ENCODE measurements at regions of chr10 and their contacts with region 1.

Region 1: DNA sequence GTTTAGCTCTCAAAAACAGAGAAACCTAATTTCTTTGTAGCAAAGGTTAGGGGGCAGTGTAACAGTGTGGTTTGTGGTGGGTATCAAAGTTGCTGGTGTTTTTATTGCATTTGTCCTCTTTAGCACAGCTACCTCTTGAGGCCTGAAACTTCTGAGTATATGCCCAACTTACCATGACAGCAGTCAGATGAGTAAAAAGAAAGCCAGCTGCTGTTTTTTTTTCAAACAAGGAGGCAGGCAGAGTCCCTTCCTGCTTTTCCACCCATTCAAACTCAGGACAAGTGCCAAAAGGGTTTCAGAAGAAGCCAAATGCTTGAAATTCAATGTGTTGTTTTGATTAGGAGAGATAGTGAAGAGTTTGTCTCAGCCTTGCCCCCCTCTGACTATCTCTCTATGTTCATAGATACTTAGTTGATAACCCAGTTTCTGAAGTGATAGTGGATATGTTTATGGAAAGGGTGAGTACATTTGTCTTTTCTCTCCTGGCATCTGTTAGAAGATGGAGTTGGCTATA is 23.1 kb downstream of the GBF1 start:
- DNase-seq: no peak
- ATAC-seq: peak; percentile 61
- H3K4me3 Mint-ChIP-seq: peak overlapping the region; percentile 48
- H3K27ac Mint-ChIP-seq: peak overlapping the region; percentile 94
- H3K4me1 Mint-ChIP-seq: peaks cover 57% of the 10 kb centered on the region
- H3K27me3 Mint-ChIP-seq: no peaks in the 10 kb centered on the region

Region 2: GRCh38 chr10:102280397-102281101 is 12.1 kb after region 1 on chr10:
- CTCF ChIA-PET with region 1: interaction called, 27 read pairs
- POLR2A ChIA-PET with region 1: interaction called, 26 read pairs
- intact Hi-C with region 1: loop called (anchors 1 kb)
- DNase-seq: no peak
- ATAC-seq: no peak
- H3K4me3 Mint-ChIP-seq: peak overlapping the region; percentile 0
- H3K27ac Mint-ChIP-seq: peak overlapping the region; percentile 72
- H3K4me1 Mint-ChIP-seq: peaks cover 59% of the 10 kb centered on the region
- H3K27me3 Mint-ChIP-seq: no peaks in the 10 kb centered on the region

Region 3: GRCh38 chr10:102287538-102287937 is 19.1 kb after region 1 on chr10:
- CTCF ChIA-PET with region 1: interaction called, 27 read pairs
- POLR2A ChIA-PET with region 1: interaction called, 26 read pairs
- intact Hi-C with region 1: loop called (anchors 1 kb)
- DNase-seq: no peak
- ATAC-seq: peak; percentile 49
- H3K4me3 Mint-ChIP-seq: no peak overlapping the region
- H3K27ac Mint-ChIP-seq: peak overlapping the region; percentile 66
- H3K4me1 Mint-ChIP-seq: peaks cover 65% of the 10 kb centered on the region
- H3K27me3 Mint-ChIP-seq: no peaks in the 10 kb centered on the region

Region 4: DNA sequence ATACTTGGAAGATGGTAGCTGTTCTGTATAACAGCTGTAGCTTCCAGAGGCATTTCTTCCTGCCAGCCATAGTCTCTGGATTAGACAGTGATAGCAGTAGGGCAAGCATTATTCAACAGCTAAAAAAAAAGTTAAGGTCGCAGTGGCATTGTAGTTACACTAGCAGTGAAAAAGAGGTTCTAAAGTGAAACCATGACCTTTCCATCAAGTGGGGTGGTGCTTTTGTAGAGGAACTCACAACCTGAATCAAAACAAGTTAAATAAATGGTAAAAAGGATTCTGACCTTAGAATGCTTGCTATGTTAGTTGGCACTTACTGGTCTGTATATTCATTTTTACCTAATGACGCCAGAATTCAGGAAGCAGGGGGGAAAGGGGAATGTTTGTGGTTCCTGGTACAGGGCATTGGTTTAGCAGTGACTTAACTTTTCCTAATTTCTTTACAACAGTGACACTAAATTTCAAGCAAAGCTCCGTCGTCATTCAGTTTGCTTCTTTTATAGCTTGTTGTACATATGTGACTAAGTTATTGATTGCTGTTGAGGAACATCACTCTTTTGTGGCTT is 31.9 kb after region 1 on chr10:
- CTCF ChIA-PET with region 1: interaction called, 4 read pairs
- POLR2A ChIA-PET with region 1: no interaction called
- intact Hi-C with region 1: loop called in 1 of 2 experiments (anchors 1 kb)
- DNase-seq: no peak
- ATAC-seq: peak; percentile 75
- H3K4me3 Mint-ChIP-seq: no peak overlapping the region
- H3K27ac Mint-ChIP-seq: peak overlapping the region; percentile 48
- H3K4me1 Mint-ChIP-seq: peaks cover 24% of the 10 kb centered on the region
- H3K27me3 Mint-ChIP-seq: no peaks in the 10 kb centered on the region

Region 5: DNA sequence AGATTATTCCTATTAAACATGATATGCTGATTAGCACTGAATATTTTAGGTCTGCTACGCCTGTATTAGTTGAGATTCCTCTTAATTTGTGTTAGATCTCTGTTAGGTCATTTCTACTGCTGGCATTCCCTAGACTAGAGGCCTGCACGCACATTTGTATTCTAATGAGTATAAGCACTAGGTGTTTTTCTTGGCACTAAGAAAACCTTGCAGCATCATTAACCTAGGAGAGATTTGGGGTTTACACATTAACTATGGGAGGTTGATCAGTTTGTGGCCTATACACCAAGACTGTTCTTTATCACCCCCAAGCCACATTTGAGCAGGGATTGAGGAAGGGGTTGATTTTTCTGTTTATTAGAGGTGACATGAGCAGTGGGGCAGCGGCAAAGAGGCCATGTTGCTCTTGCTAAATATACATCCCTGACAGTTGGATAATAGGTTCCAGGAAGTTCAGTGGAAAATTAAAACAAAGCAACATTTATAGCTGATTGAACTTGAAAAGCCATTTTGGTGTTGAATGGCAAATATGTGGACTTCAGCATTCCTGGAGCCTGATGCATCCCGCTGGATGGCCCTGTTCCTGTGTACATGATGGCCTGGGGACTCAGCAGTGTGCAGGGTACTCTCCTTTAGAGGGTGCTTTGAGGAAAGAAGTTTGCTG is 42.1 kb after region 1 on chr10:
- CTCF ChIA-PET with region 1: interaction called, 6 read pairs
- POLR2A ChIA-PET with region 1: interaction called, 14 read pairs
- intact Hi-C with region 1: no loop called
- DNase-seq: no peak
- ATAC-seq: no peak
- H3K4me3 Mint-ChIP-seq: no peak overlapping the region
- H3K27ac Mint-ChIP-seq: no peak overlapping the region
- H3K4me1 Mint-ChIP-seq: peaks cover 53% of the 10 kb centered on the region
- H3K27me3 Mint-ChIP-seq: no peaks in the 10 kb centered on the region

Region 6: DNA sequence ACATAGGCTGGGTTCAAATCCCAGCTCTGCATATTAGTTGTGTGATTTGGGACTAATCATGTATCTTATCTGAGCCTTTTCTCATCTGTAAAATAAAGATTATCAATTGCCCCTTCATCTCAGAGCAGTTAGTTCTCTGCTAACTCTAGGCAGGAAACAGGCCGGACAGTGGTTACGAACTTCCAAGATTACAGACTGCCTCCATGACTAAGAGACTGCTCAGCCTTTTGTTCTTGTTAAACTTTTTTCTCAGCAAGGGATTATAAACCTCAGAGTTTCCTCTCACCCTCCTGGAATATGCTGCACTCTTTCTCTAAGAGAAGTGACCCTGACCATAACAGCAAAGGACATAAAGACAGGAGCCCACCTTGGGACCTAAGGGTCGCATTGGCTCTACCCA is 74.5 kb after region 1 on chr10:
- CTCF ChIA-PET with region 1: interaction called, 9 read pairs
- POLR2A ChIA-PET with region 1: interaction called, 3 read pairs
- intact Hi-C with region 1: loop called (anchors 1 kb)
- DNase-seq: no peak
- ATAC-seq: no peak
- H3K4me3 Mint-ChIP-seq: no peak overlapping the region
- H3K27ac Mint-ChIP-seq: no peak overlapping the region
- H3K4me1 Mint-ChIP-seq: peaks cover 33% of the 10 kb centered on the region
- H3K27me3 Mint-ChIP-seq: no peaks in the 10 kb centered on the region

Region 7: GRCh38 chr10:102444851-102445250 is 176.4 kb after region 1 on chr10:
- CTCF ChIA-PET with region 1: no interaction called
- POLR2A ChIA-PET with region 1: no interaction called
- intact Hi-C with region 1: no loop called
- DNase-seq: no peak
- ATAC-seq: no peak
- H3K4me3 Mint-ChIP-seq: no peak overlapping the region
- H3K27ac Mint-ChIP-seq: no peak overlapping the region
- H3K4me1 Mint-ChIP-seq: peaks cover 8% of the 10 kb centered on the region
- H3K27me3 Mint-ChIP-seq: no peaks in the 10 kb centered on the region

Region 8: DNA sequence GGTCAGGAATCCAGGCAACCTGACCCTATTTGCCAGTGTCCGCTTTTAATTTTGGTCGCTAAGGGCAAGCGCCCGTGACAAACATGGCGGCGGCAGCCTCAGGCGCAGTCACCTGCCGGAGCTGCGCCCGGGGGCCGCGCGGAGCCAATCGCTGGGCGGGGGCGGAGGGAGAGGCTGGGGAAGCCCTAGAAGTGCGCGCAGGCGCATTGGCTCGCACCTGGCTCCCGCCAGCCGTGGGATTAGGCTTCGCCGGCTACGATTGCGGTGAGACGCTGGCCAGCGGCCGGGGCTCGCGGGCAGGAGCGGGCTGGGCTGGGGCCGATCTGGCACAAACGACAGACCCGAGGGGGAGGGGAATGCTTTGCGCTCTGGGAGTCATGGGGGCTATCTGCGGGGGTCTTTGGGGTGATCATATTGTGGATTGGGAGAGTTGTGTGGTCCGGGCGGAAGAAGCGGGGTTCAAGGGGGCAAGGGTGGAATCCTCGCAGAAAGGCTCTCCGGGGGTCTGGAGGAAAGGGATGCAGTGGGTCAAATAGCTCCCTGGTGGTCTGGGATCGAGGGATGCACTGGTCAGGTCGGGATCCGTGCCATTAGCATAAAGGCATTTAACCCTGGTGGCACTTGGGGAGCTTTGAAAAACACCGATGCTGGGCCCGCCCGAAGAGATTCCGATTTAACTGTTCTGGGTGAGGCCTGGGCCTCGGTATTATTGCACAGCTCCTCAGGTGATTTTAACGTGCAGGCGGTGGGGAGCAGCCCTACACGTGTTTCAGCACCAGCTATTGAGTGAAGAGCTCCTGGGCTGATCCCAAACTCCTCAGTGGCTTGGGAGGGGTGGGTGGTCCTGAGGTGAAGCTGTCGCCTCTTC is 193.0 kb after region 1 on chr10:
- CTCF ChIA-PET with region 1: no interaction called
- POLR2A ChIA-PET with region 1: no interaction called
- intact Hi-C with region 1: no loop called
- DNase-seq: peak; percentile 97
- ATAC-seq: peak; percentile 98
- H3K4me3 Mint-ChIP-seq: peak overlapping the region; percentile 85
- H3K27ac Mint-ChIP-seq: peak overlapping the region; percentile 73
- H3K4me1 Mint-ChIP-seq: peaks cover 27% of the 10 kb centered on the region
- H3K27me3 Mint-ChIP-seq: no peaks in the 10 kb centered on the region